Posterior vena cava (tissue), 2 donors: ENCODE measurements at regions of chr12 and their contacts with region 1.

Region 1: GRCh38 chr12:42332301-42333285 is 6.6 kb downstream of the PPHLN1 start:
- DNase-seq: no peak

Region 2: DNA sequence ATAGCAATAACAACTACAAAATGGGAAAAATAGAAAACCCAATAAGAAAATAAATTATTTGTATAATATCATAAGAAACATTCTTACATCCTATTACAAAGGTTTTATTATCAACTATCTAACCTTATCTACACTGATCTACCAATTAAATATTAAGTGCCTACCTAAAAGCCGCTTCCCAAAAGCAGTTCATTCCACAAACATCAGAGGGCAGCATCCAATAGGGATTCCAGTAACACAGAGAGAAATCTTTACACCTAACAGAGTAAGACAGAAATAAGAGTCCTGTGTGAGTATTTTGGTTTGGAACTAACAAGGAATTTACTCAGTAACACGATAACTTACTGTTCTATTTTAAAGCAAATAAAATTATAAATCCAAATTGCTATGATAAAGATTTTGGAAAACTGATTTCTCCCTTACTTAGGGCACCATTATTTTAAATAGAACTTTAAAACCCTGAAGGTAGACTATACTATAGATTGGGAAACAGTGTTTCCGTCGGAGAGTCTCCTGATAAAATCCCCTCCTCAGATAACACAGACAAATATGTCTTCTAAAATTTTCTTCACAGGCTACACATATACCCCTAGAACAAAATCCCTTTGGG is 202.9 kb before region 1 on chr12:
- intact Hi-C with region 1: loop called in 1 of 2 experiments (anchors 5 kb)
- DNase-seq: no peak